ENCODE measurements at regions of chr7 and their contacts with region 1.

Region 1: DNA sequence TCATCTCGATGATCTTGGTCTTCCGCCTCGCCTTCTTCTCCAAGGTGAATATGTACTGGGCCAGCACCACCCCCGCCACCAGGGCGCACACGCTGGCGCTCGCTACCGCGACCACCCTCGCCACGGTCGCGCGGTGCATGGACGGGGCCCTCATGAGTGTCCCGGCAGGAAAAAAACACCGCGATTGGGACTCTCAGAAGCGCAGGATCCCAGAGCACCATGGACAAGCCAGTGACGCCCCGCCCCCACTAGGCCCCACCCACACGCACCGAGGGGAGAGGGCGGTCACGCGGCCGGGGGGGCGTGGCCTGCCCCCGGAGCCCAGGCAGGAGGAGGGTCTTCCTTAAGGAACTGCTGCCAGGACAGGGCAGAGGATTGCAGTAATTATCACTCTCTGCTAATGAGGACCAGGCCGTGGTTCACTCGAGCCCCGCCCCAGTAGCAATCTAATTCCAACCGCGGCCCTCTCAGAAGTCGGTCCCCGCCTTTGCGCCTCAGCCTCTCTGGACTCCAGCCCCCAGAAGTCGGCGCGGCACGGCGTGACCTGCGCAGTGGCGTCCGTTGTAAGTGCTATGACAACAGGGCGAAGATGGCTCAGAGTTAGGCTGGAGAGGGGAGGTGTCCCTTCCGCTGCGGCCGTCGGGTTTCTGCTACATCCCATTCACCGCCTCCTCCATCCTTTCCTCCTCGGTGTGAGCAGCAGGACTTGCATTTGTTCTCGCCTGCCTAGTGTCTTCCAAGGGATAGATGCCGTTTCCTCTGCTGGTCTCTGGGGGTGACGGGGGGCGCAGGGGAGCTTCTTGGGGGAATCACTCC is at the start of gene BBS9:
- DNase-seq: peak; percentile 80 to 94 (median 91)
- ATAC-seq: peak; percentile 95
- H3K4me3 ChIP-seq: peak within 1 kb of the TSS; percentile 85 to 88
- H3K4me3 Mint-ChIP-seq: peak within 1 kb of the TSS; percentile 96
- H3K27ac ChIP-seq: peak within 1 kb of the TSS; percentile 65 to 72
- H3K27ac Mint-ChIP-seq: peak within 1 kb of the TSS; percentile 91
- H3K4me1 ChIP-seq: peaks cover 14% of the 10 kb centered on the region
- H3K4me1 Mint-ChIP-seq: peaks cover 28% of the 10 kb centered on the region
- H3K27me3 ChIP-seq: no peaks in the 10 kb centered on the region
- H3K27me3 Mint-ChIP-seq: no peaks in the 10 kb centered on the region
- CTCF ChIP-seq: no peak
- total RNA-seq, gene BBS9: 15.7 to 16.7 TPM

Region 2: GRCh38 chr7:32495298-32496176 is 633.7 kb before region 1 on chr7 and contains the start of gene AVL9:
- CTCF ChIA-PET with region 1: no interaction called
- POLR2A ChIA-PET with region 1: no interaction called
- intact Hi-C with region 1: loop called (anchors 1 to 2 kb)
- DNase-seq: peak; percentile 98 to 99 (median 99)
- ATAC-seq: peak; percentile 89
- H3K4me3 ChIP-seq: peak within 1 kb of the TSS; percentile 66 to 87
- H3K4me3 Mint-ChIP-seq: peak within 1 kb of the TSS; percentile 97
- H3K27ac ChIP-seq: peak within 1 kb of the TSS; percentile 95 to 99
- H3K27ac Mint-ChIP-seq: peak within 1 kb of the TSS; percentile 96
- H3K4me1 ChIP-seq: peaks cover 31% of the 10 kb centered on the region
- H3K4me1 Mint-ChIP-seq: peaks cover 42% of the 10 kb centered on the region
- H3K27me3 ChIP-seq: no peaks in the 10 kb centered on the region
- H3K27me3 Mint-ChIP-seq: no peaks in the 10 kb centered on the region
- CTCF ChIP-seq: no peak
- total RNA-seq, gene AVL9: 22.4 to 24.7 TPM

Region 3: GRCh38 chr7:32905175-32905662 is 224.0 kb before region 1 on chr7:
- CTCF ChIA-PET with region 1: no interaction called
- POLR2A ChIA-PET with region 1: no interaction called
- intact Hi-C with region 1: no loop called
- DNase-seq: peak; percentile 37 to 92 (median 66)
- ATAC-seq: peak; percentile 83
- H3K4me3 ChIP-seq: peak overlapping the region; percentile 28 to 42
- H3K4me3 Mint-ChIP-seq: peak overlapping the region; percentile 81
- H3K27ac ChIP-seq: peak overlapping the region; percentile 72 to 73
- H3K27ac Mint-ChIP-seq: peak overlapping the region; percentile 91
- H3K4me1 ChIP-seq: peaks cover 13% of the 10 kb centered on the region
- H3K4me1 Mint-ChIP-seq: peaks cover 13% of the 10 kb centered on the region
- H3K27me3 ChIP-seq: no peaks in the 10 kb centered on the region
- H3K27me3 Mint-ChIP-seq: no peaks in the 10 kb centered on the region
- CTCF ChIP-seq: no peak

Region 4: DNA sequence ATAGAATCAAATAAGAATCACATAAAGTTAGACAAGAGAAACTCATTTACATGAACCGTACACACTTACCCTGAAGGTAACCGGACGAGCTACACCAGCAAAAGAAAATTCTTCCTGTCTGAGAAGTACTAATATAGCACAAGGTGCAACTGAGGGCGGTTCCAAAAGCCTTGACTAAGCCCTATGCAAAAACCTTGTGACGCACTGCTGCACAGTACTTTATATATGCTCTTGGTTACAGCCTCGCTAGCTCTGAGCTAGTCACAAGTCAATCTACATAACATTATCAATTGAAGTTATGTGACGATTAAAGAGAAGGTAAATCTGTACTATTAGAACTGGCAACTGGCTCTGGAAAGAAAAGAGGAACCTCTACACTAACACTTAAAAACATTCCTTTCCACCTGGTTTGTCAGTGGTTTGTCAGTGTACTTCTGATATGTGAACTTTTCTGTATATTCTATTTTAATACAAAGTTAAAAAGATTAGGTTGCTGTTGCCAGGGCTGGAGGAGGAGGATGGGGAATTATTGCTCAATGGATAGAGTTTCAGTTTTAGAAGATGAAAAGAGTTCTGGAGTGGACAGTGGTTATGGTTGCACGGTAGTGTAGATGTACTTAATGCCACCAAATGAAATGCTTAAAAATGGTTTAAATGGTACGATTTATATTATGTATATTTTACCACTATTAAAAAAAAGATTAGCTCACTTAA is 88.2 kb before region 1 on chr7:
- CTCF ChIA-PET with region 1: no interaction called
- POLR2A ChIA-PET with region 1: no interaction called
- intact Hi-C with region 1: loop called in 1 of 2 experiments (anchors 1 kb)
- DNase-seq: peak; percentile 36 to 87 (median 63)
- ATAC-seq: peak; percentile 99
- H3K4me3 ChIP-seq: peak overlapping the region; percentile 3 to 23
- H3K4me3 Mint-ChIP-seq: peak overlapping the region; percentile 77
- H3K27ac ChIP-seq: peak overlapping the region; percentile 54 to 75
- H3K27ac Mint-ChIP-seq: peak overlapping the region; percentile 90
- H3K4me1 ChIP-seq: peaks cover 25% of the 10 kb centered on the region
- H3K4me1 Mint-ChIP-seq: peaks cover 61% of the 10 kb centered on the region
- H3K27me3 ChIP-seq: no peaks in the 10 kb centered on the region
- H3K27me3 Mint-ChIP-seq: no peaks in the 10 kb centered on the region
- CTCF ChIP-seq: no peak

Measured in CD8-positive, alpha-beta T cell (primary cell).